ENCODE measurements at regions of chr11 and their contacts with region 1.

Region 1: GRCh38 chr11:86202013-86202336 is 42.6 kb upstream of the EED start:
- DNase-seq: no peak
- ATAC-seq: peak; percentile 46
- H3K4me3 ChIP-seq: peak overlapping the region; percentile 44 to 88 (median 61)
- H3K4me3 Mint-ChIP-seq: no peak overlapping the region
- H3K27ac ChIP-seq: peak overlapping the region; percentile 59 to 68
- H3K27ac Mint-ChIP-seq: no peak overlapping the region
- H3K4me1 ChIP-seq: peaks cover 22 to 32% of the 10 kb centered on the region in 2 donors
- H3K4me1 Mint-ChIP-seq: peaks cover 8% of the 10 kb centered on the region
- H3K27me3 ChIP-seq: no peaks in the 10 kb centered on the region
- H3K27me3 Mint-ChIP-seq: no peaks in the 10 kb centered on the region
- CTCF ChIP-seq: no peak

Region 2: DNA sequence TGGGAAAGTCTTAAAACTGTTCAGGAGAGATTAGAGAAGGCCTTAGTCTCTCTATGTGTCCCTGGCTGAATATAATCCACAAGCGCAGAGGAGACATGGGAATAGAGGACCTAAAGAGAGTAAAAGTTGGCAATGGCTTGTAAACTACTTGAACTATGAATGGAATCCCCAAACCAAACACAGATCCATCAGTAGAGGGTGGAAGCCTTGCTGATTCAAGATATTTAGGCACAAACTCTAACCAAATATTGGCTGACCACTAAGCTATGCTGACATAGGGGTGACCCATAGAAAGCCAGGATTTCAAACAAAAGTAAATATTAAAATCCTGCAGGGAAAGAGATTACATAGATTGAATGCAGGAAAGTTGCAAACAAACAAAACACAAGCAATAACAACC is 1014.0 kb before region 1 on chr11:
- CTCF ChIA-PET with region 1: no interaction called
- POLR2A ChIA-PET with region 1: no interaction called
- intact Hi-C with region 1: no loop called
- DNase-seq: no peak
- ATAC-seq: no peak
- H3K4me3 ChIP-seq: no peak overlapping the region
- H3K4me3 Mint-ChIP-seq: no peak overlapping the region
- H3K27ac ChIP-seq: no peak overlapping the region
- H3K27ac Mint-ChIP-seq: no peak overlapping the region
- H3K4me1 ChIP-seq: no peaks in the 10 kb centered on the region
- H3K4me1 Mint-ChIP-seq: no peaks in the 10 kb centered on the region
- H3K27me3 ChIP-seq: no peaks in the 10 kb centered on the region
- H3K27me3 Mint-ChIP-seq: no peaks in the 10 kb centered on the region
- CTCF ChIP-seq: no peak

Region 3: DNA sequence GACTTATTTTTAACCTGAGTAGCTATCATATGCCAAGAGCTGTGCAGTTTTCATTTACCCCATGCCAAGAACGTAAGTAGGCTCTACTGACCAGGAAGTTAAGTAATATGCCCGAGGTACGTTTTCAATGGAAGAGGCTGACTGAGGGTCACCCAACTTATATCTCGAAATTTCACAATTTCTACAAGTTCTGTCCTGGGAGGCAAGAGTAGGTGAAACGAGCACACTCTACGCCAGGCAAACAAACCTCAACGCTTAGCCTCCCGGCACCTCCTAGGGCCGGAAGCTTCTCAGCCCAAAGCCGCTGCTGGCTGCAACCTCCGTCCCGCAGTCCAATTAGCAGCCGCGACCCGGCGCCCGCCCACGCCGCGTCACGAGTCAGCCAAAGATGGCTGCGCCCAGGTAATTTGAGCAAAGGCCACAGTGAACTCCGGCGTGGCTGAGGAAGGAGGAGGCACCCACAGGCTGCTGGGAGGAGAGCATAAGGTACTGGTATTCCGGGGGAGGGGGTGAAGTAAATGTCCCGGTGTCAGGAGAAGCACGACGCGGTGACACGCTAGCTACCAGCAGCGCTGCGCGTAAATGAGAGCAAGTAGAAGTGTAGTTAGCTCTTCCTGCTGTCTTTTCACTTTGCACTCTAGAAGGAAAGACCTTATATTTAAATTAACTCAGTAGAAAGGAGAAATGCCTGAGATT is 554.2 kb before region 1 on chr11 and contains the start of gene TMEM126A:
- CTCF ChIA-PET with region 1: no interaction called
- POLR2A ChIA-PET with region 1: no interaction called
- intact Hi-C with region 1: no loop called
- DNase-seq: peak; percentile 91
- ATAC-seq: peak; percentile 99
- H3K4me3 ChIP-seq: peak within 1 kb of the TSS; percentile 79 to 87 (median 85)
- H3K4me3 Mint-ChIP-seq: peak within 1 kb of the TSS; percentile 89
- H3K27ac ChIP-seq: peak within 1 kb of the TSS; percentile 71 to 91
- H3K27ac Mint-ChIP-seq: peak within 1 kb of the TSS; percentile 93
- H3K4me1 ChIP-seq: peaks cover 12 to 13% of the 10 kb centered on the region in 2 donors
- H3K4me1 Mint-ChIP-seq: peaks cover 18% of the 10 kb centered on the region
- H3K27me3 ChIP-seq: peaks cover 0 to 12% (median 4%) of the 10 kb centered on the region in 4 experiments
- H3K27me3 Mint-ChIP-seq: peaks cover 19% of the 10 kb centered on the region
- CTCF ChIP-seq: no peak
- total RNA-seq, gene TMEM126A: 13.0 and 15.8 TPM in 2 replicates

Region 4: DNA sequence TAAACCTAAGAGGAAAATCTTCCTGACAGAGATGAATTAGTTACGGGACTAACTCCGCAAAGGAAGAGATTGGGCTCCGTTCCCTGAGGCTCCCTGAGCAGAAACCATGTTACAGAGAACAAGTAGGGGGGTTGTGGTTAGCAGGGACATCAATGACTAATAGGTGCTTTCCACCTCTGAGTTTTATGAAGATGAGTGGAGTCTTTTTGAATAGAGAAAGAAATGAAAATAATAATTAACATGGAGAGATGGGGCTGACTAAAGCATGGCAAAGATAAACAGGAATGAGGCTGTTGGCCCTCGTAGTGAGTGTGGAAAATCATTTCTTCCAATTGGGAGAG is 85.6 kb before region 1 on chr11:
- CTCF ChIA-PET with region 1: no interaction called
- POLR2A ChIA-PET with region 1: no interaction called
- intact Hi-C with region 1: no loop called
- DNase-seq: peak; percentile 28
- ATAC-seq: peak; percentile 92
- H3K4me3 ChIP-seq: no peak overlapping the region
- H3K4me3 Mint-ChIP-seq: peak overlapping the region; percentile 38
- H3K27ac ChIP-seq: no peak overlapping the region
- H3K27ac Mint-ChIP-seq: peak overlapping the region; percentile 54
- H3K4me1 ChIP-seq: peaks cover 7 to 12% of the 10 kb centered on the region in 2 donors
- H3K4me1 Mint-ChIP-seq: peaks cover 20% of the 10 kb centered on the region
- H3K27me3 ChIP-seq: no peaks in the 10 kb centered on the region
- H3K27me3 Mint-ChIP-seq: no peaks in the 10 kb centered on the region
- CTCF ChIP-seq: no peak

Region 5: GRCh38 chr11:86218125-86219084 is 16.4 kb after region 1 on chr11:
- CTCF ChIA-PET with region 1: interaction called, 32 read pairs
- POLR2A ChIA-PET with region 1: interaction called, 7 read pairs
- intact Hi-C with region 1: loop called (anchors 1 kb)
- DNase-seq: peak; percentile 65
- ATAC-seq: peak; percentile 29
- H3K4me3 ChIP-seq: peak overlapping the region in 4 of 5 experiments; percentile 21 to 53 (median 34)
- H3K4me3 Mint-ChIP-seq: peak overlapping the region; percentile 75
- H3K27ac ChIP-seq: peak overlapping the region; percentile 62 to 77
- H3K27ac Mint-ChIP-seq: peak overlapping the region; percentile 86
- H3K4me1 ChIP-seq: peaks cover 31 to 36% of the 10 kb centered on the region in 2 donors
- H3K4me1 Mint-ChIP-seq: peaks cover 37% of the 10 kb centered on the region
- H3K27me3 ChIP-seq: no peaks in the 10 kb centered on the region
- H3K27me3 Mint-ChIP-seq: no peaks in the 10 kb centered on the region
- CTCF ChIP-seq: peak; percentile 68

Measured in B cell (primary cell).